Heart left ventricle (tissue), 16 donors: ENCODE measurements at regions of chr15 and their contacts with region 1.

Region 1: DNA sequence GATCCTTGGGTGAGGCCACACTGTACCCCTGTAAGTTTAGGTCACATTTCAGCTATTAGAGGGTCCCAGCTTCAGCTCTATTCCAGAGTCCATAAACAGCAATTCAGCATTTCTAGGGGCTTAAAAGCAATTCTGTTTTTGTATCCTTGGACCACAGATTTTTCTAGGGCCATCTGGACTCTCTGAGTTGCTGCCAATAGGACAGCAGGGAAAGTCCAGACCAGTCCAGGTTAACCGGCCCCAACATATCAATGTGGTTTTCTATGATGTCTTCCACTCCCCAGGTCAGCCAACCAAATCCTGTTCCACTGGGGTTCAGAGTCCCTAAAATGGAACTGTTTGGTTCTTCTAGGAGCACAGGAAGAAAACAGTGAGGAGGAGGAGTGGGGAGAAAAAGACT is 40.0 kb downstream of the TYRO3 start:
- DNase-seq: no peak
- ATAC-seq: no peak
- H3K4me3 ChIP-seq: no peak overlapping the region
- H3K27ac ChIP-seq: no peak overlapping the region
- H3K4me1 ChIP-seq: peaks cover 0 to 6% (median 1%) of the 10 kb centered on the region in 12 donors
- H3K27me3 ChIP-seq: no peaks in the 10 kb centered on the region
- CTCF ChIP-seq: no peak
- POLR2A ChIP-seq: no peak

Region 2: DNA sequence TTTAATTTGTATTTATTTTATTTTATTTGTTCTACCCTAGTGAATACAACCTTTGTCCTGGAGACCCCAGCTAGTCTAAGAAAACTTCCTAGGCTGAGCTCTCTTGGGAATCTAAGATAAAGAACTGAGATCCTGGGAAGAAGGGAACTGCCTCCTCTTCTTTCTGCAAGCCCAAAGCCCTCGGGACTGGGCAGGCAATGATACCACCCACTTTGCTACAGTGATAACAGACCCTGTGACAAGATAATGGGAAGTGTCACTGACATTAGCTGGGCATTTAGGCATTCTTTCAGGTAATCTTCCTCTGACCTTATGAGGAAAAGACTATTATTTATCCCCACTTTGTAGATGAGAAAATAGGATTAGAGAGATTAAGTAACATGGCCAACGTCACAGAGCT is 24.9 kb before region 1 on chr15:
- intact Hi-C with region 1: loop called in 1 of 10 experiments (anchors 1 kb)
- DNase-seq: no peak
- ATAC-seq: no peak
- H3K4me3 ChIP-seq: no peak overlapping the region
- H3K27ac ChIP-seq: no peak overlapping the region
- H3K4me1 ChIP-seq: peaks cover 0 to 7% (median 0%) of the 10 kb centered on the region in 12 donors
- H3K27me3 ChIP-seq: no peaks in the 10 kb centered on the region
- CTCF ChIP-seq: no peak
- POLR2A ChIP-seq: no peak

Region 3: GRCh38 chr15:41790756-41791546 is 191.9 kb after region 1 on chr15:
- intact Hi-C with region 1: no loop called
- DNase-seq: peak in 3 of 5 donors; percentile 30 to 60 (median 46)
- ATAC-seq: peak; percentile 51 to 75 (median 62)
- H3K4me3 ChIP-seq: no peak overlapping the region
- H3K27ac ChIP-seq: peak overlapping the region in 11 of 12 donors; percentile 6 to 67 (median 49)
- H3K4me1 ChIP-seq: peaks cover 11 to 60% (median 42%) of the 10 kb centered on the region in 12 donors
- H3K27me3 ChIP-seq: no peaks in the 10 kb centered on the region
- CTCF ChIP-seq: no peak
- POLR2A ChIP-seq: no peak

Region 4: DNA sequence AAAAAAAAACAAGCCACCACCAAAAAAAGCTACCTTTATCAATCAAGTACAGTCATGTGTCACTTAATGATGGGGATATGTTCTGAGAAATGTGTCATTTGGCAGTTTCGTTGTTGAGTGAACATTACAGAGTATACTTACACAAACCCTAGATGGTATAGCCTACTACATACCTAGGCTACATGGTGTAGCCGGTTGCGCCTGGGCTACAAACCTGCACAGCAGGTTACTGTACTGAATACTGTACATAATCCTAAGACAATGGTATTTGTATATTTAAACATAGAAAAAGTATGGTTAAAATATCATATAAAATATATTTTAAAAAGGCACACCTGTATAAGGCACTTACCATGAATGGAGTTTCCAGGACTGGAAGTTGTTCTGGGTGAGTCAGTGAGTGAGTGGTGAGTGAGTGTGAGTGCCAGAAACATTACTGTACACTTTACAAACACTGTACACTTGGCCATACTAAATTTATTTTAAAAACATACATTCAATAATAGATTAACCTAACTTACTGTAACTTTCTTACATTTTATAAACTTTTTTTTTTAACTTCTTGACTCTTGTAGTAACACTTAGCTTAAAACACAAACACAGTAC is 202.9 kb after region 1 on chr15:
- intact Hi-C with region 1: no loop called
- DNase-seq: no peak
- ATAC-seq: no peak
- H3K4me3 ChIP-seq: no peak overlapping the region
- H3K27ac ChIP-seq: no peak overlapping the region
- H3K4me1 ChIP-seq: peaks cover 0 to 39% (median 6%) of the 10 kb centered on the region in 12 donors
- H3K27me3 ChIP-seq: no peaks in the 10 kb centered on the region
- CTCF ChIP-seq: no peak
- POLR2A ChIP-seq: no peak